ENCODE measurements at regions of chr7 and their contacts with region 1.

Region 1: GRCh38 chr7:146090023-146090645 is 26.5 kb upstream of the CNTNAP2 start:
- DNase-seq: peak; percentile 10
- ATAC-seq: 0 out of 2 replicates have a peak, but pooled peaks have one; percentile 49
- H3K4me3 ChIP-seq: no peak overlapping the region
- H3K27ac ChIP-seq: no peak overlapping the region
- H3K4me1 ChIP-seq: no peaks in the 10 kb centered on the region
- H3K27me3 ChIP-seq: no peaks in the 10 kb centered on the region
- CTCF ChIP-seq: peak; percentile 35 to 60 (median 37); a peak in 4 of 6 replicates
- POLR2A ChIP-seq: no peak
- RAD21 ChIP-seq: peak; percentile 56

Region 2: DNA sequence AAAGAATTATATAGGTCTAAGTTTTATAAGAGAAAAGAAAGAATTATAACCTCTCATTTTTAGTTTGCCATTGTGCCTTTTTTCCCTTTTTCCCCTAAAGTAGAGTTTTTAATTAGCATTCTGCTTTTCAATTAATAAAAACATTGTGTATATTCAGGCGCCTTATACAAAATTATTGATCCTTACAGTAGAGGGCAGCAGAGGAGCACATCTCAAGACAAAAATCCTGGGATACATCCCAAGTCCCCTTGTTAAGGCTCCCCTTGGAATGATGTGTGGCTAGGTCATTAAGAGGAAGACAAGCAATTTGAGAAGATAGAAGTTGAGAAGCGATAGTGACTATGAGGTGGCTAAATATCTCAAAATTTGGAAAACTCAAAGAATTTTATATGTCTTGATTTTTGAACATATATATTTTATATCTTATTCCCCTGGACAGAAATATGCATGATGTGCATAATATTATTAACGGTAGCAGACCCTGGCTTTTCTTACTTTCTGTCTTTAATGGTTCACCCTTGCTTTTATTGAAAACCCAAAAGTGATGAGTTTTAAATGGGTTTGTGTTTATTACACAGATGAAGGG is 1235.2 kb before region 1 on chr7:
- CTCF ChIA-PET with region 1: interaction called, 4 read pairs
- POLR2A ChIA-PET with region 1: no interaction called
- RAD21 ChIA-PET with region 1: no interaction called
- intact Hi-C with region 1: loop called (anchors 2 kb)
- DNase-seq: peak; percentile 42
- ATAC-seq: peak; percentile 76
- H3K4me3 ChIP-seq: no peak overlapping the region
- H3K27ac ChIP-seq: no peak overlapping the region
- H3K4me1 ChIP-seq: no peaks in the 10 kb centered on the region
- H3K27me3 ChIP-seq: no peaks in the 10 kb centered on the region
- CTCF ChIP-seq: peak; percentile 34 to 73 (median 54); a peak in 4 of 6 replicates
- POLR2A ChIP-seq: no peak
- RAD21 ChIP-seq: peak; percentile 71

Region 3: GRCh38 chr7:145036604-145037405 is 1053.3 kb before region 1 on chr7:
- CTCF ChIA-PET with region 1: no interaction called
- POLR2A ChIA-PET with region 1: no interaction called
- RAD21 ChIA-PET with region 1: no interaction called
- intact Hi-C with region 1: loop called (anchors 1 kb)
- DNase-seq: peak; percentile 44
- ATAC-seq: peak; percentile 74
- H3K4me3 ChIP-seq: no peak overlapping the region
- H3K27ac ChIP-seq: no peak overlapping the region
- H3K4me1 ChIP-seq: no peaks in the 10 kb centered on the region
- H3K27me3 ChIP-seq: no peaks in the 10 kb centered on the region
- CTCF ChIP-seq: peak; percentile 36 to 87 (median 67); a peak in 5 of 6 replicates
- POLR2A ChIP-seq: no peak
- RAD21 ChIP-seq: peak; percentile 72

Region 4: GRCh38 chr7:146276888-146277287 is 186.8 kb after region 1 on chr7:
- CTCF ChIA-PET with region 1: no interaction called
- POLR2A ChIA-PET with region 1: no interaction called
- RAD21 ChIA-PET with region 1: no interaction called
- intact Hi-C with region 1: no loop called
- DNase-seq: no peak
- ATAC-seq: no peak
- H3K4me3 ChIP-seq: no peak overlapping the region
- H3K27ac ChIP-seq: no peak overlapping the region
- H3K4me1 ChIP-seq: no peaks in the 10 kb centered on the region
- H3K27me3 ChIP-seq: no peaks in the 10 kb centered on the region
- CTCF ChIP-seq: no peak
- POLR2A ChIP-seq: no peak
- RAD21 ChIP-seq: no peak

Measured in HCT116 (cell line).